GM12878 (cell line): ENCODE measurements at regions of chr1 and their contacts with region 1.

Region 1: DNA sequence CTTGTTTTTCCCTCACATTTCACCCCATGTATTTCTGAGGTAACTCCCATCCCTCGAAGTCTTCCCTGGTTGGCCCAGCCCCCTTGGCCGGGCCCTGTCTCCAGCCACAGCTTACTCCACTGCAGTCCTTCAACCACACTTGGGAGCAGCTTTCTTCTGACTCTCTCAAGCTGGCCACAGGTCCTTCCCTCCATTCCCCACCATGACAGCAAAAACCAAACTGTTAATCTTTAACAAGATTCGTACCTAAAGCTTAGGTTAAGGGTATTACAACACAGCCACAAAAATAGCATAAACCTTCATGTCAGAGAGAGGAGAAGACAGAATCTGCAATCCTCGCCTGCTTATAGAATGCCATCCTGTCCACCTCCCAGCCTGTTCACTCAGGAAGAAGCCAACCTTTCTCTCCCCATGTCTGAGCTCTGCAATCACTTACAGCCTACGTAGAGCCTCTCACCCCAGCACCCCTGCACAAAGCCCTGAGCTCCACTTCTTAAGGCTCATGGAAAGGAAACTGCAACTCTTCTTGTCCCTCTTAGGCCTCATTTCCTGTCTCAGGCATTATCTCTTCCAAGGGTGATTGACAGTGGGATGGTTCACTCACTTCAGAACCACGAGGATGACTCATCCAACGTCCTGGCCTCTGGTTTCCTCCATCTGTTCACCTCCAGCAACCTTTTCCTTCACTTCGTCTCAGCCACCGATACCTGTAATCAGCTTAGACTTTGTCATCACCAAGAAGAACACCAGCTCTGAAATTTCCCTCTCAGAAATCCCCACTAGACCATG is 72.8 kb downstream of the CD2 start:
- DNase-seq: peak; percentile 97
- ATAC-seq: peak; percentile 87
- H3K4me3 ChIP-seq: no peak overlapping the region
- H3K27ac ChIP-seq: peak overlapping the region; percentile 60
- H3K4me1 ChIP-seq: peaks cover 23% of the 10 kb centered on the region
- H3K27me3 ChIP-seq: no peaks in the 10 kb centered on the region; a peak in 1 of 4 replicates
- CTCF ChIP-seq: no peak
- EP300 ChIP-seq: peak; percentile 17 to 90; a peak in 2 of 4 replicates
- POLR2A ChIP-seq: no peak
- RAD21 ChIP-seq: 0 out of 2 replicates have a peak, but pooled peaks have one; percentile 10

Region 2: GRCh38 chr1:116556289-116557006 is 270.6 kb before region 1 on chr1:
- CTCF ChIA-PET with region 1: no interaction called
- POLR2A ChIA-PET with region 1: no interaction called
- RAD21 ChIA-PET with region 1: no interaction called
- SMC1A ChIA-PET with region 1: no interaction called
- in situ Hi-C with region 1: no loop called
- intact Hi-C with region 1: loop called (anchors 5 kb)
- DNase-seq: peak; percentile 96
- ATAC-seq: peak; percentile 70
- H3K4me3 ChIP-seq: 0 out of 2 replicates have a peak overlapping the region, but pooled peaks have one; percentile 9
- H3K27ac ChIP-seq: peak overlapping the region; percentile 100
- H3K4me1 ChIP-seq: peaks cover 69% of the 10 kb centered on the region
- H3K27me3 ChIP-seq: no peaks in the 10 kb centered on the region
- CTCF ChIP-seq: no peak; a peak in 1 of 6 replicates
- EP300 ChIP-seq: peak; percentile 80 to 96
- POLR2A ChIP-seq: peak; percentile 64
- RAD21 ChIP-seq: peak; percentile 37; the same call in 1 of the 2 replicates

Region 3: DNA sequence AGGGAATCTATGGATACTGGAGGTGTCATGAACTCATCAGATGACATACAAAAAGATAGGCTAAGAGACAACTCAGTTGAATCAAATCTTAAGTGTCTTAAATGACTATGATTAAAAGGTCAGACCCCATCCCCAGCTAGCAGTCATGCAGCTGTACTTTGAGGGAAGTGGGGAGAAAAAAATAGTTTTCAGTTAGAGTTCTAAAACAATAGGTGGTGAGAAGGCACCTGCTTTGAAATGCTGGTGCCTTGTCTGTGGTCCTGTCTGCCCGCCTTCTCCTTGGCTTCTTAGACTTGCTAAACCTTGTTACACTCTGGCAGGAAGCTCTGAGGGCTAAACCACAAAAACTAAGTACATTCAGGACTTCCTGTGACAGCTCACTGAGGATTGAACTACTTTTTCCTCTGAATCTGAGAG is 57.4 kb before region 1 on chr1:
- CTCF ChIA-PET with region 1: interaction called, 9 read pairs
- POLR2A ChIA-PET with region 1: interaction called, 15 read pairs
- RAD21 ChIA-PET with region 1: interaction called, 45 read pairs
- SMC1A ChIA-PET with region 1: interaction called, 64 read pairs
- in situ Hi-C with region 1: no loop called
- intact Hi-C with region 1: no loop called
- DNase-seq: peak; percentile 68
- ATAC-seq: peak; percentile 80
- H3K4me3 ChIP-seq: peak overlapping the region; percentile 6; the same call in 1 of the 2 replicates
- H3K27ac ChIP-seq: peak overlapping the region; percentile 40; the same call in 1 of the 2 replicates
- H3K4me1 ChIP-seq: peaks cover 21% of the 10 kb centered on the region
- H3K27me3 ChIP-seq: no peaks in the 10 kb centered on the region
- CTCF ChIP-seq: no peak
- EP300 ChIP-seq: 0 out of 4 replicates have a peak, but pooled peaks of 1 of the 2 experiments have one; percentile 39
- POLR2A ChIP-seq: no peak
- RAD21 ChIP-seq: no peak; the same call in 1 of the 2 replicates

Region 4: DNA sequence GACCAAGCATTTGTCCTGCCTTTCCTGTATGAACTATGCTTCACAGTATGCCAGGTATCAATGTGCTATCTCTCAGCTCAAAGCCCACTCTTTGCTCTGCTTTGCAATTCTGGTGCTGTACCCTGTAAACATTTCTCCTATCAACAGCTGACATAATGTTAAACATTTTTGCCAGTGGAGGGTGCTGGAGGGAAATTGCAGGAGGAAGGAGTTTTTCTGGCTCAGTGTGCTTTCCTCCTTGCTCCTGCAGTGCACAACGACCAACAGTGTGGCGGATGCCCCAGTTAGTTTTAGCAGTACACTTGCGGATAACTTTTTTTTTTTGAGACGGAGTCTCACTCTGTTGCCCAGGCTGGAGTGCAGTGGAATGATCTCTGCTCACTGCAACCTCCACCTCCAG is 15.6 kb after region 1 on chr1:
- CTCF ChIA-PET with region 1: interaction called, 21 read pairs
- POLR2A ChIA-PET with region 1: interaction called, 10 read pairs
- RAD21 ChIA-PET with region 1: interaction called, 35 read pairs
- SMC1A ChIA-PET with region 1: interaction called, 35 read pairs
- in situ Hi-C with region 1: no loop called
- intact Hi-C with region 1: no loop called
- DNase-seq: no peak
- ATAC-seq: no peak; the same call in 2 of the 3 replicates
- H3K4me3 ChIP-seq: no peak overlapping the region
- H3K27ac ChIP-seq: no peak overlapping the region
- H3K4me1 ChIP-seq: peaks cover 2% of the 10 kb centered on the region; the same call in 1 of the 2 replicates
- H3K27me3 ChIP-seq: no peaks in the 10 kb centered on the region
- CTCF ChIP-seq: no peak
- EP300 ChIP-seq: no peak
- POLR2A ChIP-seq: no peak
- RAD21 ChIP-seq: no peak

Region 5: GRCh38 chr1:116853670-116854402 is 26.8 kb after region 1 on chr1:
- CTCF ChIA-PET with region 1: interaction called, 7 read pairs
- POLR2A ChIA-PET with region 1: interaction called, 9 read pairs
- RAD21 ChIA-PET with region 1: interaction called, 13 read pairs
- SMC1A ChIA-PET with region 1: interaction called, 12 read pairs
- in situ Hi-C with region 1: no loop called
- intact Hi-C with region 1: no loop called
- DNase-seq: no peak
- ATAC-seq: peak; percentile 81
- H3K4me3 ChIP-seq: no peak overlapping the region
- H3K27ac ChIP-seq: no peak overlapping the region
- H3K4me1 ChIP-seq: 0 out of 2 replicates have a peak, but pooled peaks cover 3% of the 10 kb centered on the region
- H3K27me3 ChIP-seq: no peaks in the 10 kb centered on the region
- CTCF ChIP-seq: no peak
- EP300 ChIP-seq: no peak
- POLR2A ChIP-seq: no peak
- RAD21 ChIP-seq: no peak

Region 6: DNA sequence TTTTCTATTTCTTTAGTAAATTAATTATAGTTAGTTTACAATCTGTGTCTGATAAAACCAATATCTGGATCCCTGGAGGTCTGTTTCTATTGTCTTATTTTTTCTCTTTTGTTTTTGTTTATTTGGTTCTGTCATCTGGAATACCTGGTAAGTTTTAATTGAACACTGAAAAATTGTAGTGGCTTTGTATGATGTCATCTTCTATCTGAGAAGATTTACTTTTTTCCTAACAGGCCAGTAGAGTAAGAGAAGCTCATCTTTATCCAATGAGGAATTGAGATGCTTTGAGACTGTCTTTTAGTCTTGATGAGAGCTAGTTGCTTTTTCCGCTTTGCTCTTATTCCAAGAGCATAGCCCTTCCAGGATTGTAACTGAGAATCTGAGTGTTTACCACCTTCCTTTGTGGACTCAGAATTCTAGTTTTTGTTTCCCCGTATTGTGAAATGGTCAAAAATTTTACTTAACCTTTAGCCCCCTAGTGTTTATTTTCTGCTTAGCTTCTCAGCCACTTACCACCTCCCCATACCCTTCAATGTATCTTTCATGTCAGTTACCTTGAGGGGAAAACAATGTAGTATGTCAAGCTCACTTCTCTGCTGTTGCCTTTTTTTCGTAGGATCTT is 107.7 kb after region 1 on chr1:
- CTCF ChIA-PET with region 1: interaction called, 20 read pairs
- POLR2A ChIA-PET with region 1: interaction called, 3 read pairs
- RAD21 ChIA-PET with region 1: interaction called, 10 read pairs
- SMC1A ChIA-PET with region 1: interaction called, 12 read pairs
- in situ Hi-C with region 1: no loop called
- intact Hi-C with region 1: no loop called
- DNase-seq: no peak
- ATAC-seq: peak; percentile 83
- H3K4me3 ChIP-seq: no peak overlapping the region
- H3K27ac ChIP-seq: no peak overlapping the region
- H3K4me1 ChIP-seq: no peaks in the 10 kb centered on the region
- H3K27me3 ChIP-seq: no peaks in the 10 kb centered on the region
- CTCF ChIP-seq: peak; percentile 37 to 54 (median 43); a peak in 5 of 6 replicates
- EP300 ChIP-seq: no peak
- POLR2A ChIP-seq: no peak
- RAD21 ChIP-seq: peak; percentile 39; the same call in 1 of the 2 replicates

Region 7: DNA sequence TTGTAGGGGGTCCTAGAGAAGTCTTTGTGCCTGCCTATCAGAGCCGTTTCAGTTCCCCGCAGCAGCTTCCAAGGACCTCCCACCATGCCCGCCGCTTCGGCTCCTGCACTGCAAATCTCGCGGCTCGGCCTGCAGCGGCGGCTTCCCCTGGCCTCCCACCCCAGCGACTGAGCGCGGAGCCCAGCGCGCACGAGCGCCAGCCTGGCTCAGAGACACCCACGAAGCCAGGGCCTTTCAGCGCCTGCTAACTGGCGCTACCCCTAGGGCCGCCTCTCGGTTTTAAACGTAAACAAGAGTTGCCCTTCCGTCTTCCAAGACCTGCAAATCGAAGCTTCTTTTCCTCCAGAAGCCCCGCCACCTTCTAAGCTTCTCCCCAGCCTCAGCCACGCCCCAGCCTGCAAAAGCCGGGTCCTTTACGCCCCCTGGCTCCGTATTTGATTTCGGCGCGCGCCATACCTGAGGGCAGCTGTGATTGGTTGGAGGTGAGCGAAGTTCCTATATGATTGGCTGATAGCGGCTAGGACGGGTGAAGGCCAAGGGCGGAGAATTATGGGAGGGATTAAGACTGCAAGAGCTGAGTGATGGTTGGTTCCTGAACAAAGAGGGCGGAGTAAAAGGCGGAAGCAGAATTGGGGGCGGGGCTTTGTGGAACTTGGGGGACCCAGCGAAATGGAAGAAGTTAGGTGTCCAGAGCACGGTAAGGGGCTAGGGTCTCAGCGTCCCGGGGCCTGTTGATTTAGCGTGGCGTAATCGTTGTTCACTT is 232.8 kb after region 1 on chr1 and contains the start of gene TTF2:
- CTCF ChIA-PET with region 1: interaction called, 5 read pairs
- POLR2A ChIA-PET with region 1: interaction called, 19 read pairs
- RAD21 ChIA-PET with region 1: interaction called, 18 read pairs
- SMC1A ChIA-PET with region 1: interaction called, 5 read pairs
- in situ Hi-C with region 1: no loop called
- intact Hi-C with region 1: loop called (anchors 2 kb)
- DNase-seq: peak; percentile 99
- ATAC-seq: peak; percentile 86
- H3K4me3 ChIP-seq: peak within 1 kb of the TSS; percentile 84
- H3K27ac ChIP-seq: peak within 1 kb of the TSS; percentile 90
- H3K4me1 ChIP-seq: peaks cover 4% of the 10 kb centered on the region
- H3K27me3 ChIP-seq: no peaks in the 10 kb centered on the region
- CTCF ChIP-seq: peak in 1 of 3 experiments; percentile 26; a peak in 1 of 6 replicates
- EP300 ChIP-seq: peak in 1 of 2 experiments; percentile 40; a peak in 1 of 4 replicates
- POLR2A ChIP-seq: peak; percentile 85
- RAD21 ChIP-seq: no peak
- polyA plus RNA-seq, gene TTF2: 17.7 to 20.8 TPM

Region 8: DNA sequence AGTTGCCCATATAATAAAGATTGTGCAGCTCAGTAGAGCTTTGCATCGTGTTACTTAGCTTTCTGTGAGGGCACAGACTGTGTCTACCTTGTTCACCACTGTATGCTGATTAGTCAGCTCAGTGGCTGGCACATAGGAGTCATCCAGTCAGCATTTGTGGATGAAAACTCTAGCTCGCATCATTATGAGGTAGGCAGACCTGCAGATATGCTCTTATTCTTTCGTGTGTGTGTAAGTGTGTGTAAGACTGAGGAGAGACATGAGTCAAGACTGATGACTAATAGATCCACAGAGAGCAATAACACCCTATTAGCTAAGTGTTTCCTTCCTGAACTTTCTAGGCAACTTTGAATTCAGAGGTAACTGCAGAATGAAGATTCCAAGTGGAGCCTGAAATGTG is 250.3 kb after region 1 on chr1:
- CTCF ChIA-PET with region 1: no interaction called
- POLR2A ChIA-PET with region 1: no interaction called
- RAD21 ChIA-PET with region 1: no interaction called
- SMC1A ChIA-PET with region 1: no interaction called
- in situ Hi-C with region 1: no loop called
- intact Hi-C with region 1: no loop called
- DNase-seq: no peak
- ATAC-seq: peak; percentile 27; the same call in 2 of the 3 replicates
- H3K4me3 ChIP-seq: no peak overlapping the region
- H3K27ac ChIP-seq: no peak overlapping the region
- H3K4me1 ChIP-seq: no peaks in the 10 kb centered on the region
- H3K27me3 ChIP-seq: no peaks in the 10 kb centered on the region
- CTCF ChIP-seq: no peak
- EP300 ChIP-seq: no peak
- POLR2A ChIP-seq: no peak
- RAD21 ChIP-seq: no peak